ENCODE measurements at regions of chr5 and their contacts with region 1.

Region 1: GRCh38 chr5:144142139-144142823 is 28.2 kb downstream of the YIPF5 start:
- DNase-seq: peak; percentile 24
- CTCF ChIP-seq: peak; percentile 58

Region 2: DNA sequence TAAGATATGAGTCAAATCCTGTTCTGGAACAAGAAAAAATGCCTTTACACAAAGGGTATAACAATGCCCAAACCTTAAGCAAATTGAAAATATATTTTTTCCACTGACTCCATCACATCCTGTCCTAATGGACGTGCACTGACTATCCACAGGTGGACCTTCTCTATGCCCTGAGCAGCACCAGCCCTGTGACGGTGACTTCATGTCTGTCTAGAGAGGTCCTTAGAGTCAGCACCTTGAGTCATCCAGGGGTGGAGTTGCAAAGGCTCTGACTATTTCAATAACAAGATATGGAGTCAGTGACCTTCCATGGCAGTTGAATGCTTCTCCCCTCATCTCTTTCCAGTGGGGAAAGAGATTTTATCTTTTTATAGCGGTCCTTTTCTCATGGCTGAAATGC is 49.8 kb before region 1 on chr5:
- CTCF ChIA-PET with region 1: no interaction called
- POLR2A ChIA-PET with region 1: no interaction called
- DNase-seq: no peak
- CTCF ChIP-seq: no peak

Region 3: GRCh38 chr5:144125163-144125726 is 17.0 kb before region 1 on chr5:
- CTCF ChIA-PET with region 1: interaction called, 12 read pairs
- POLR2A ChIA-PET with region 1: no interaction called
- DNase-seq: no peak
- CTCF ChIP-seq: no peak

Region 4: DNA sequence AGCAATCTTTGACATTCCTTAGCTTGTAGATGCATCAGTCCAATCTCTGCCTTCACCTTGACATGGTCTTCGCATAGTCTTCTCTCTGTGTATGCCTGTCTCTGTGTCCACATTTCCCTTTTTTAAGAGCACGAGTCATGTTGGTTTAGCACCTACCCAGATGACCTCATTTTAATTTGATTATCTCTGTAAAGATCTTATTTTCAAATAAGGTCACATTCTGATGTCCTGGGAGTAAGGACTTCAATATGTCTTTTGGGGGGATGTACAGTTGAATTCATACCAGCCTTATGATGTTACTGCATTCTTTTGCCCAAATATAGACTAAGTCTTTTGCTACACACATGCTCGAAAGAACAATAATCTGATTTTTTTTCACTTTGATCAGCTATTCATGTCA is 35.3 kb after region 1 on chr5:
- CTCF ChIA-PET with region 1: no interaction called
- POLR2A ChIA-PET with region 1: no interaction called
- DNase-seq: no peak
- CTCF ChIP-seq: no peak

Measured in GM10248 (cell line).